ENCODE measurements at regions of chr6 and their contacts with region 1.

Region 1: DNA sequence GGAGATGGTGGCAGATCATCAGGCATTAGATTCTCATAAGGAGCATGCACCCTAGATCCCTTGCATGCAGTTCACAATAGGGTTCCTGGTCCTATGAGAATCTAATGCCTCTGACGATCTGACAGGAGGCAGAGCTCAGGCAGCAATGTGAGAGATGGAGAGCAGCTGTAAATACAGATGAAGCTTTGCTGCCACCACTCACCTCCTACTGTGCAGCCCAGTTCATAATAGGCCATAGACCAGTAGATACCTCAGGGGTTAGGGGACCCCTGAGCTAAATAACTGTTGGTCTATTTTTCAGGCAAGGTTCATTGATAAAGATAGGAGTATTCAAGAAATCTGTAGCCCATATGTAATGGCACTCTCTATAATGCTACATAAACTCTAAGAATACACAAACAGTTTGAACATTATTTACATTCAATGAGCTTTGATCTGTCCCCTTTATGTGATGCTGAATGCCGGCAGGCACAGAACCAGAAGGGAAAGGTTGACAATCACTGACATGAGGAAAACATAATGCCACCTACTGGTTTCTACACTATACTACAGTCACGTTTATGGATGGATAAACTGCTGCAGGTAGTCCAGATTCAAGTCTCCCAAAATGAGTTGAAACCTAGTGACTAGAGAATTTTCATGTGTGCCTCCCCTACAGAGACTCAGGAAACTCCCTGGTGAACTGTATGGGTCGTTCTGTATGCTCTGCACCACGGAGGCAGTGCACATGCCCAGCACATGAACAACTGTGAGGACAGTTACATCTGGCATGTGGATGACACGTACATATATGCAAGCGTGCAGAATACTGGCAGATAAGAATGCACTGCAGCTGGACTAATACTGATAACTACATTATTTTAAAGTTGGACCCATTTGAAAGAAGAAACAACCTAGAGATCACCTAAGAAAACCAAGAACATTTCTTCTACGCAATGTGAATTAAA is 72.0 kb downstream of the DST start:
- DNase-seq: peak; percentile 9
- ATAC-seq: peak; percentile 70
- H3K4me3 Mint-ChIP-seq: no peak overlapping the region
- H3K27ac Mint-ChIP-seq: no peak overlapping the region
- H3K4me1 Mint-ChIP-seq: no peaks in the 10 kb centered on the region
- H3K27me3 Mint-ChIP-seq: no peaks in the 10 kb centered on the region

Region 2: GRCh38 chr6:56359201-56359899 is 211.3 kb before region 1 on chr6:
- CTCF ChIA-PET with region 1: interaction called, 10 read pairs
- POLR2A ChIA-PET with region 1: no interaction called
- intact Hi-C with region 1: loop called (anchors 1 kb)
- DNase-seq: peak; percentile 75
- ATAC-seq: no peak
- H3K4me3 Mint-ChIP-seq: no peak overlapping the region
- H3K27ac Mint-ChIP-seq: no peak overlapping the region
- H3K4me1 Mint-ChIP-seq: no peaks in the 10 kb centered on the region
- H3K27me3 Mint-ChIP-seq: peaks cover 1% of the 10 kb centered on the region

Region 3: GRCh38 chr6:56370561-56371211 is 200.0 kb before region 1 on chr6:
- CTCF ChIA-PET with region 1: no interaction called
- POLR2A ChIA-PET with region 1: no interaction called
- intact Hi-C with region 1: loop called in 1 of 2 experiments (anchors 5 kb)
- DNase-seq: no peak
- ATAC-seq: no peak
- H3K4me3 Mint-ChIP-seq: no peak overlapping the region
- H3K27ac Mint-ChIP-seq: no peak overlapping the region
- H3K4me1 Mint-ChIP-seq: peaks cover 4% of the 10 kb centered on the region
- H3K27me3 Mint-ChIP-seq: peaks cover 2% of the 10 kb centered on the region

Region 4: DNA sequence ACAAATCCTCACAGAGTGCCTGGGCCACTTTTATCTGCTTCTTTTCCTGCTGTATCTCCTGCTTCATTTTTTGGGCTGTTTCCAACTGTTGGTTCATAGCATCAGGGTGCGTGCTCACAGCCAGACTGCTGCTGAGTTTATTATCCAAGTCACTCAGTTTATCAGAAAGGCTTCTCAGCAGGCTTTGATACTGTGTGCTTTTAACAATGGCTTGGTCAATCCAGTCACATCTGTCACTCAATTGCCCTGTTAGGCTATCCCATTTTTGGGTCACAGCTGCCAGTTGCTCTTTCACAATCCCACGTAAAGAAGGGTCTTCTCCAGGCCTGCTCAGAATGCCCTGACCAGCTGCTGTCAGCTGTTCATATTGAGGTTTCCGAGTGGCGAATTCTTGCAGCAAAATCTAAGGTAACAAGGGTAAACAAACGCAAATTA is 15.2 kb before region 1 on chr6:
- CTCF ChIA-PET with region 1: interaction called, 13 read pairs
- POLR2A ChIA-PET with region 1: no interaction called
- intact Hi-C with region 1: no loop called
- DNase-seq: no peak
- ATAC-seq: no peak
- H3K4me3 Mint-ChIP-seq: no peak overlapping the region
- H3K27ac Mint-ChIP-seq: no peak overlapping the region
- H3K4me1 Mint-ChIP-seq: no peaks in the 10 kb centered on the region
- H3K27me3 Mint-ChIP-seq: no peaks in the 10 kb centered on the region

Region 5: DNA sequence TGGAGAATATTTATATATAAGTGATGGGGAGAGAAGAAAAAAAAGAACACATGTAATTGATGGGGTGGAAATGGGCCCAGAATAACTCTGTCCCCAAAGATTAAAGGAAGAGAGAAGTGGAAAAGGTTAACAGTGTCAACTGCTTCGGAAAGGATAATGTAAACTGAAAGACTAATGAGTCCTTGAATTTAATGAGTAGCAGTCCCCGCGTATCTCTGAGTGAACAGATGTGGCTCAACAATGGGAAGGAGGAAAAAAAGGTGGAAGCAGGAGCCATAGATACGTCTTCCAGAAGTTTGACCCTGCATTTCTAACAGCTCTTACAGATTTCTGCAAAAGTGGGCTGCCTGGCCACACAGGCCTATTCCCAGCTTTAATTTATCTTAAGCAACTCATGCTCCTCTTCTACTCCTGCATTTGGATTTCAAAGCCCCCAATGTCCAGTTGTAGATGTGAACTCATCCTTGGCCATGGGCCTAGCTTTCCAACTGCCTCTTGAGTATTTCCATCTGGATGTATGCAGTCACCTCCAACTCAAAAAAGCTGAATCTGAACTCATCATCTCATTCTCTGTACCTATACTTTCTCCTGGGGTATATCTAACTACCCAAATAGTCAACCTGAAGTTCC is 10.7 kb after region 1 on chr6:
- CTCF ChIA-PET with region 1: interaction called, 11 read pairs
- POLR2A ChIA-PET with region 1: no interaction called
- intact Hi-C with region 1: no loop called
- DNase-seq: no peak
- ATAC-seq: no peak
- H3K4me3 Mint-ChIP-seq: no peak overlapping the region
- H3K27ac Mint-ChIP-seq: no peak overlapping the region
- H3K4me1 Mint-ChIP-seq: no peaks in the 10 kb centered on the region
- H3K27me3 Mint-ChIP-seq: peaks cover 3% of the 10 kb centered on the region

Measured in activated CD4-positive, alpha-beta T cell treated with anti-CD3 and anti-CD28 coated beads for 36 hours (primary cell).